ENCODE measurements at regions of chr12 and their contacts with region 1.

Region 1: GRCh38 chr12:30754709-30755394 is at the start of gene CAPRIN2:
- DNase-seq: peak; percentile 94
- H3K4me3 Mint-ChIP-seq: peak within 1 kb of the TSS; percentile 94
- H3K27ac Mint-ChIP-seq: peak within 1 kb of the TSS; percentile 82
- H3K4me1 Mint-ChIP-seq: peaks cover 24% of the 10 kb centered on the region
- H3K27me3 Mint-ChIP-seq: peaks cover 6% of the 10 kb centered on the region
- total RNA-seq, gene CAPRIN2: 9.1 and 9.4 TPM in 2 replicates

Region 2: DNA sequence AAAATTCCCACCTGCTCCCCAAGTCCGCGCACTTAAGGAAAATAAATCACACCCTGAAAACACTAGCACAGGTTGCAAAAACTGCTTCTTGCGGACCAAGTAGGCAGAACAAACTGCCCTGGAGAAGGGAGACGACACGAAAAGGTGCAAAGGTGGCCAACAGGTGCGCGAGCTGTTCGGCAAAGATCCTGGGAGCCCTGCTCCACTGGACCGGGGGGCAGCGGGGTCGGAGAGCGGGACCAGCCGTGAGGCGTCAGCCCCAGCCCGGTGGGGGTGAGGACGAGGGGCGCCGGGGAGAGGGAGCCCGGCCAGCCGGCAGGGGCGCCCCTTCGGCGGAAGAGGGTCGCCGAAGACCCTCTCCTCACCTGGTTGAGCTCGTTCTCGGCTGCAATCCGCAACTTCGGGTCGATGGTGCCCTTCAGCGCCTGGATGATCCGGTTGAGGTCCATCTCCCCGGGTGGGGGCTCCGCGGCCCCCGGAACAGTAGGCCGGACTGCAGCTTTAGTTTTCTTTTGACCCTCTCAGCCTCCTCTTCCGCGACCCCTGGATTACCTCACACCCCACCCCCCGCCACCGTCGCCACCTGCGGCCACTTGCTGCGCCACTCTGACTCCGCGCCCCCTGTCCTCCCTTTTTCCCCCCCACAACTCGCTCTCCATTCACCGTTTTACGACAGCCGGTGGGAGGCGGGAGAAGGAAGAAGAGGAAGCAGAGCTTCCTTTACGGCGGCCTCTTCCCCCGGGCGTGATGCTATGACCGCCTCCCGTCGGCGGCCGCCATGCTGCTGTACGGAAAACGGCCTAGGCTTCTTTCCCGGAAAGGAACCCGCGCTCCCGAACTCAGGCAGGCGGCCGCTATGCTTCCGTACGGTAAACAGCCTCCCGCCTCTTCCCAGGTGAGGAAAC is 59.4 kb before region 1 on chr12 and contains the start of gene IPO8:
- intact Hi-C with region 1: loop called (anchors 1 kb)
- DNase-seq: peak; percentile 80
- H3K4me3 Mint-ChIP-seq: peak within 1 kb of the TSS; percentile 96
- H3K27ac Mint-ChIP-seq: peak within 1 kb of the TSS; percentile 94
- H3K4me1 Mint-ChIP-seq: peaks cover 40% of the 10 kb centered on the region
- H3K27me3 Mint-ChIP-seq: peaks cover 6% of the 10 kb centered on the region
- total RNA-seq, gene IPO8: 41.8 and 50.5 TPM in 2 replicates

Region 3: DNA sequence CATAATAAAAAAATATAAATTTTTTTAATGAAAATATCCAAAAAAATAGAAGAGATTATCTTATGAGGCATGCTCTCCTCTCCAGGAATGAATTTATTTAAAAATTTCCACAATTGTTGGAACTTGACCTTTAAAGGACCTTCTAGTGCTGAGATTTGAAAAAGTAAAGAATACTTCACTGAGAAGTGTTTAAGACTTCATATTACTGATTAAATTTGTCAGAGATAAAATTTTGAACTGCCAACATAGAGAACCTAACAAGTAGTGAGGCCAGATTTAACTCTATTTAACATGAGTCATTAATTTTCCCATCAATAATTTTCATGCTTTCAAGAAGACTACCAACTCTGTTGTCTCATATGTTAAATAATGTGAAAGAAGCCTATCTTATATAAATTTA is 14.6 kb before region 1 on chr12:
- intact Hi-C with region 1: no loop called
- DNase-seq: no peak
- H3K4me3 Mint-ChIP-seq: no peak overlapping the region
- H3K27ac Mint-ChIP-seq: no peak overlapping the region
- H3K4me1 Mint-ChIP-seq: no peaks in the 10 kb centered on the region
- H3K27me3 Mint-ChIP-seq: no peaks in the 10 kb centered on the region

Region 4: DNA sequence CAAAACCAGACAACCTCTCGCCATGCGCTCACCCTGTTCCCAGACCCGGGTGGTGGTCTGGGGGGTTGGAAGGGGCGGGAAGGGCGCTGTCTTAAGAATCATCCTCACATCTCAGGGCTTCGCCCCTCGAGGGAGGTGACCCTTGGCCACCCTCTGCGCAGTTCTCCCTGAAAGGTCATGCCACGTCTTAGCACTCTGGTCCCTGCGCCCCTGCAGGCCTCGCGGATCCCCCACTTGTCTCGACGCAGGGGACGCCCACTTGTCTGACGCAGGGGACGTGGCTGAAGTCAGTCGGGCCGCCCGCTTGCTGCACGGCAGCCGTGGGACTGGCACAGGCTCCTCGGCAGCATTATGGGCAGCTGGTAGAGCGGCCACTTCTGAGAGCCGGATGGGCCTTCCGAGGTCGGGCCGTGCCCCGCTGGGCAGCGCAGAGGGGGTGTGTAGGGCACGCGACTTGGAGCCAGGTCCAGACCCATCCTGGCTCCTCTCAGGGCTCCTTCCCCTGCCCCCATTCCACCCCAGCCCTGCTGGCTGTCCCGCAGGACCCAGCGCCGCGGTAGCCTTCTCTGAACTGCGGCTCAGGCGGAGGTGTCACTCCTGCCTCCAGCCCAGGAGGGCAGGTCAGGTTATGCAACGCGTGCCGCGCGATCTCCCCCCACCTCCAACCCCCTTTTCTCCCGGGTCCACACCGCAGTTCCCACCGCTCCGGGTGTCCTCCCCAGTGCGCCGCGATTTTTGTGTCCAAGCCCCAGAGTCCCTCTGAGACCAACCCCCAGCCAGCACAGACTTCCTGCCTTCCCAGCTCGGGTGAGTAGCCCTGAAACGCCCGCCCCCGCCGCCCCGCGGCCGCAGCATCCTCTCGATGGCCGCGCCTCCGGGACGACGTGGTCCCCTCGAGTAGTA is 40.8 kb after region 1 on chr12:
- intact Hi-C with region 1: loop called (anchors 1 kb)
- DNase-seq: peak; percentile 43
- H3K4me3 Mint-ChIP-seq: peak overlapping the region; percentile 57
- H3K27ac Mint-ChIP-seq: no peak overlapping the region
- H3K4me1 Mint-ChIP-seq: peaks cover 16% of the 10 kb centered on the region
- H3K27me3 Mint-ChIP-seq: peaks cover 51% of the 10 kb centered on the region

Region 5: GRCh38 chr12:30840715-30841114 is 85.9 kb after region 1 on chr12:
- intact Hi-C with region 1: loop called (anchors 5 kb)
- DNase-seq: no peak
- H3K4me3 Mint-ChIP-seq: no peak overlapping the region
- H3K27ac Mint-ChIP-seq: no peak overlapping the region
- H3K4me1 Mint-ChIP-seq: no peaks in the 10 kb centered on the region
- H3K27me3 Mint-ChIP-seq: peaks cover 15% of the 10 kb centered on the region

Region 6: DNA sequence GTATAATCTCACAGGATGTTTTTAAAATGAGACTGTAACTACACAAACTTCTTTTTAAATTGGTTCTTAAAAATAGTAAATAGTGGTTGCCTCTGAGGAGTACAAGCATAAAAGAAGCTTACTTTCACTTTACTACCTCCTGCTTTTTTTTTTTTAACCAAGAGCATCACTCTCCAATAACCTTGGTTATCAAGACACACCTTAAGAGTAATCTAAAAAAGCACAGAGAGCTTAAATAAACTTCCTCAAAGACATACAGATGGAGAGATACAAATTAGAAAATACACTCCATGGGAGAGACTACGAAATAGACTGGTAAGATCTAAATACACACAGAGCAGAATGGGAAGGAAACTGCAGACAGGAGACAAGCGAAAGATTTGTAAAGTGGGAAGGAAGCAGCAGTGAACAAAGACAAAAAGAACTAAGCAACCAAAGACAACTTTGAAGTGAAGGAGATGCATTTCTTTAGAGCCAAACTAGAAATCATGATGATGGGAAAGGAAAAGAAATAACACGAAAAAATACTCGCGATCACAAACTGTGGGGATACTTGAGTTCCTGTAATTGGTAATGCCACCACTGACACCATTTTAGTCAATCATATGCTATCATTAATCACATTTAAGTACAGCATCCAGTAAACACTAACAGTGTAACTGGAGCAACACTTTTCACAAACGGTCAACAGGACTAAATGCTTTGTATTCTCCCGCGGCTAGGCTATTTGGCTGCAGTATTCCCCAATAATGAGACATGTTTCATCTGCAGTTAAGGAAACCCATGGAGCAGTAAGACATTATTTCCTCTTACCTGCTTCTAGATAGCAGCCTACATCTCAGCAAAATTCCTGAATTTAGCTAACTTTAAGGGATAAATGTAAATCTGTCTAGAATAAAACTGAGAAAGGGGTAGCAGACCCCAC is 562.9 kb after region 1 on chr12:
- intact Hi-C with region 1: loop called (anchors 2 kb)
- DNase-seq: no peak
- H3K4me3 Mint-ChIP-seq: peak overlapping the region; percentile 97
- H3K27ac Mint-ChIP-seq: peak overlapping the region; percentile 90
- H3K4me1 Mint-ChIP-seq: peaks cover 84% of the 10 kb centered on the region
- H3K27me3 Mint-ChIP-seq: no peaks in the 10 kb centered on the region